ENCODE measurements at regions of chr9 and their contacts with region 1.

Region 1: GRCh38 chr9:137188490-137189296 is at the starts of genes ANAPC2 and SSNA1:
- DNase-seq: peak; percentile 99
- H3K4me3 Mint-ChIP-seq: peak within 1 kb of the TSS; percentile 91
- H3K27ac Mint-ChIP-seq: peak within 1 kb of the TSS; percentile 94
- H3K4me1 Mint-ChIP-seq: peaks cover 22% of the 10 kb centered on the region
- H3K27me3 Mint-ChIP-seq: no peaks in the 10 kb centered on the region
- total RNA-seq, gene ANAPC2: 57.4 and 58.7 TPM in 2 replicates
- total RNA-seq, gene SSNA1: 95.1 and 95.8 TPM in 2 replicates

Region 2: DNA sequence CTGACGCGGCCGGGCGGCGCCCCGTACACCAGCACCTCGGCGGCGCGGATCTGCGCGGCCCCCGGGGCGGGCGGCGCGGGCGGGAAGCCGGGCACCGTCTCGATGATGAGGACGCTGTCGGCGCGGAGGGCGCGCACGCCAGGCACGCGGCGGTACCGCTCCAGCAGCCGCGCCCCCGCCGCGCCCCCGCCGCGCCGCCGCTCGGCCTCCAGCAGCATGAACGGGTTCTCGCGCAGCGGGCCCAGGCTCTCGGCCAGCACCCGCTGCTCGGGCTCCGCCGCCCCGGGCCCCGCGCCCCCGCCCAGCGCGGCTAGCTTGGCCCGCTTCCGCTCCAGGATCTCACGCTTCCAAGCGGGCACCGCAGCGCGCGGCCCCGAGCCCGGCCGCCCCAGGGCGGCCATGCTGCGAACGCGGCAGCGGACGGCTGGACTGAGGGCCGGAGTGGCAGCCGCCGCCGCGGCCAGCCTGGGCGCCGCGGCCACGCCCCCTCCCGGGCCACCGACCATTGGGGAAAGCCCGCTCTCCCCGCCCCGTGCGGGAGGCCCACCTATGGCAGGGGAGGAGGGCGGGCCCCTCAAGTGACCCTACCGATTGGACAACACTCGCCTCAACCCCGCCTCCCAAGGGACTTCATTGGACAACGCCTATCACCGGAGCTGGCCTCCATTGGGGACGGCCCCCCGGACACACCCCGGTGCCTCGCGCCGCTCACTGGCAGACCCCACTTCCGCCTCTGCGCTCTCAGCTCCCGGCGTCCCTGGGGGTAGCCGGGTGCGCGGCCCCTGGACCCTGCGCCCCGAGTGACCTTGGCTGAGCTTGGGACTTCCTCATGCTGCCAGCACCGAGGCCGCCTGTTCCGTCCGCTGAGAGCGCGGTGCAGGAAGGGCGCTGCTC is 11.9 kb after region 1 on chr9 and contains the start of gene TPRN:
- intact Hi-C with region 1: loop called (anchors 1 kb)
- DNase-seq: peak; percentile 100
- H3K4me3 Mint-ChIP-seq: peak within 1 kb of the TSS; percentile 87
- H3K27ac Mint-ChIP-seq: peak within 1 kb of the TSS; percentile 65
- H3K4me1 Mint-ChIP-seq: peaks cover 14% of the 10 kb centered on the region
- H3K27me3 Mint-ChIP-seq: peaks cover 2% of the 10 kb centered on the region
- total RNA-seq, gene TPRN: 15.1 and 16.3 TPM in 2 replicates

Region 3: GRCh38 chr9:137353223-137354152 is 164.8 kb after region 1 on chr9:
- intact Hi-C with region 1: no loop called
- DNase-seq: no peak
- H3K4me3 Mint-ChIP-seq: no peak overlapping the region
- H3K27ac Mint-ChIP-seq: no peak overlapping the region
- H3K4me1 Mint-ChIP-seq: no peaks in the 10 kb centered on the region
- H3K27me3 Mint-ChIP-seq: no peaks in the 10 kb centered on the region